GM10248 (cell line): ENCODE measurements at regions of chr7 and their contacts with region 1.

Region 1: DNA sequence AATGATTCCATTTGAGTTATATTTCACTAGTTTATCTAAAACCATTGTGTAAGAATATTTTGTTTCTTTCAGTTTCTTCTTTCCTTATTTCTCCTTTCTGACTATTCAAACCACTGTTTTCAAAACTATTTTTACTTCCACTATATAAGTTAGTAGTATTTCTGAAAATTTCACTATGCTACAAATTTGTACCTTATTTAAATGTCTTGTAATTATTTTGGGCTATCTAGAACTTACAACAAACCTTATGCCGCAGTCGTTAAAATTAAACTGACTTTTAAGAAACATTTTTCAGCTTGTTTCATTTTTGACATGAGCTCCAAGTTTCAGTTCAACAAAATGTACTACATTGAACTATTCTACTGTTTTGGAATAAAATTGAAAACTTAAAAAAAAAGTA is 1.8 kb downstream of the TFEC start:
- DNase-seq: peak; percentile 6
- CTCF ChIP-seq: no peak

Region 2: DNA sequence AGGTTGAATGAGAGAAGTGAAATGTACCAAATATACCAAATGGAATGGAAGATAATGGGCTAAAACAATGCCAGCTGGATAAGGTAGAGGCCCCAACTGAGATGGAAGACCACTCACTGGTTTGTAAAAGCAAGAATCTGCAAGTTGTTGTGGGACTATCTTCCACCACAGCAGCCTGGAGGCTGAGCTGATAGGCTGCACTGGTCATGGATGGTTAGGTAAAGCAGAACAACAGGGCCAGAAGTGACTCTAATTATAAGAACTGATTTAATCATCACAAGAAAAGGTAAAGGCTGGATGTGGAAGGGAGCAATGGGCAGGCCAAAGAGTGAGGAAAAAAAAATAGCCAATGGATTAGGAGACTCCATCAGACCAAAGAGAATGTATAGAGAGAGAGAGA is 10.1 kb before region 1 on chr7:
- CTCF ChIA-PET with region 1: interaction called, 14 read pairs
- POLR2A ChIA-PET with region 1: no interaction called
- DNase-seq: no peak
- CTCF ChIP-seq: no peak